Pancreas (tissue), 10 donors: ENCODE measurements at regions of chr3 and their contacts with region 1.

Region 1: DNA sequence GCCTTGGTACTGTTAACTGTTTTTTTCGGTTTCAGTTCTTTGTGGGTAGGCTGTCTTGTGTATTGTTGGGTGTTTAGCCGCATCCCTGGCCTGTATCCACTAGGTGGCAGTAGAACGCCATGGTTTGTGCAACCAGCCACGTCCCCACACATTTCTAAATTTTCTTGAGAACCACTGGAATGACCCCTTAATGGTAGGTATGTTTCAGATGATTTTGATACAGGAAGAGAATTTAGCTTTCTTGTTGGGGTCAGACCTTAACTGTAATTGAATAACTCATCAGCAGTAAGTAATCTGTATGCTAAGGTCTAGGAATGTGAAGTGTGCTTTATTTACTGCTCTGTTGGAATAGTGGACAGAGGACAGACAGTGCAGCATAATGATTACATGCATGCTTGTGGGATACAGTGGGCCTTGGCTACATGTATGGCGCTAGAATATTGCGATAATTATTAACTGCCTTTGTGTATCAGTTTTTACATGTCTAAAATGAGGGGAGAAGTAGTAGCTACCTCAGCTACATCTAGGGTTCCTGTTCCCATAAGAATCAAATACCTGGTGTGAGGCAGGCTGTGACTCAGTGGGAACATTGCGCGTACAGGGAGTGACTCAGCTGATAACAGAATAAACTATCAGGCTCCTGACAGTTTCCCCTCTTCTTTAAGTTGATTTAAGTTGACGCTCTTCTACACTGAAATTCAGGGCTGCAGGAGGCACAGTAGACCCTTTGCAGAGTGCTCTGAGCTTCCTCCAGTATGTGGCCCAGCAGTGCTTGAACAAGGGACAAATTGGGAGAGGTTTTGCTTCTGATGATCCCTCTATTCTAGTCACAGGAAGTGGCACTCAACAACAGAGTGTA is 25.0 kb upstream of the GPR171 start:
- DNase-seq: peak; percentile 44 to 79 (median 60)
- ATAC-seq: peak; percentile 87 to 97 (median 95)
- H3K4me3 ChIP-seq: no peak overlapping the region
- H3K27ac ChIP-seq: no peak overlapping the region
- H3K4me1 ChIP-seq: no peaks in the 10 kb centered on the region
- H3K27me3 ChIP-seq: no peaks in the 10 kb centered on the region
- CTCF ChIP-seq: peak; percentile 71 to 91 (median 84)

Region 2: DNA sequence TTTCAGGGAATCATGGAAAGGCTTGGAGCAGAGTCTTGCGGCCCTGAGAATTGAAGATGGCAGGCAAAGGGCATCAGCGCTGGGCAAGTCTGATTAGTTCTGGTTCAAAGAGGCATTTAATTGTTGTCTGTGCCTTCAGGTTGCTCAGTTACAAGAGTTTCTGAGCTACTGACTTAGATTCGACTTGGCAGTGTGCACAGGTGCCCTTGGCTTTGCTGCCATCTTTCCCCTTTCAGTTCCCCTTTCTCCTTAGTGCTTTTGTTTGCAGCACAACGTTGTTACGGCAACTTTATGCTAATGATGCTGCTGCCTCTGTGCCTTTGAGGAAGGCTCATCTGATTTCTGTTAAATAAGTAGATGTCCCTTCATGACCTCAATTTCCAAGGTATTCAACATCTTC is 37.8 kb after region 1 on chr3:
- intact Hi-C with region 1: no loop called
- DNase-seq: no peak
- ATAC-seq: peak in 2 of 4 donors; percentile 70 to 74
- H3K4me3 ChIP-seq: no peak overlapping the region
- H3K27ac ChIP-seq: no peak overlapping the region
- H3K4me1 ChIP-seq: no peaks in the 10 kb centered on the region
- H3K27me3 ChIP-seq: no peaks in the 10 kb centered on the region
- CTCF ChIP-seq: no peak

Region 3: GRCh38 chr3:151282921-151283320 is 54.9 kb after region 1 on chr3:
- intact Hi-C with region 1: loop called (anchors 2 to 10 kb)
- DNase-seq: no peak
- ATAC-seq: peak; percentile 71 to 90 (median 89)
- H3K4me3 ChIP-seq: no peak overlapping the region
- H3K27ac ChIP-seq: no peak overlapping the region
- H3K4me1 ChIP-seq: no peaks in the 10 kb centered on the region
- H3K27me3 ChIP-seq: no peaks in the 10 kb centered on the region
- CTCF ChIP-seq: peak in 3 of 4 donors; percentile 34 to 53 (median 47)

Region 4: GRCh38 chr3:151289326-151289844 is 61.3 kb after region 1 on chr3:
- intact Hi-C with region 1: loop called in 2 of 3 experiments (anchors 5 to 10 kb)
- DNase-seq: no peak
- ATAC-seq: no peak
- H3K4me3 ChIP-seq: no peak overlapping the region
- H3K27ac ChIP-seq: no peak overlapping the region
- H3K4me1 ChIP-seq: no peaks in the 10 kb centered on the region
- H3K27me3 ChIP-seq: no peaks in the 10 kb centered on the region
- CTCF ChIP-seq: no peak

Region 5: DNA sequence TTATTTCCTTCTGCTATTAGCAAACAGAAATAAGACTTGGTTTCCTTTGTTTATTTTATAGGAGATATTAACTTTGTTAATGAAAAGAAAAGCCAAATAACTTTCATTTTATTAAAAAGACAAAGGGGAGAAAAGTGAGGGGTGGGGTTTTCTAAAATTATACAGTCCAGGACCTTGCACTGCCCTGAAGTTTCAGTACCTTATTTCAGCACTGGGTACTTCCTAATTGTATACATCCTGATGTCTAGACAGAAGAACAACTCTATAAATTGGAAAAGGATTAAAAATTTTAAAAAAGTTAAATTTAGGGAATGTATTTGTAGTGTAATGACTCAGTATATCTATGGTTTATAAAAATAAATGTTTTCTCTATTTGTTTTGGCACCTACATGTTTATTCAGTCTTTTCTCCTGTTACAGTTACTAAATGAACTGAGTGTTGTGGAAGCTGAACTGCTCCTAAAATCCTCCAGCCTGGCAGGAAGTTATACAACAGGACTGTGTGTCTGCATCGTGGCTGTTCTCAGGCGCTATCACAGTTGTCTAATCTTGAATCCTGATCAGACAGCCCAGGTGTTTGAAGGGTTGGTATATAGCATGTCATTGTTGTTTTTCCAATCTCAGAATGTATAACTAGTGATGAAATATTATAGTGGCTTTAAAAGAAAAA is 128.9 kb after region 1 on chr3:
- intact Hi-C with region 1: no loop called
- DNase-seq: no peak
- ATAC-seq: peak in 2 of 4 donors; percentile 29 to 37
- H3K4me3 ChIP-seq: no peak overlapping the region
- H3K27ac ChIP-seq: no peak overlapping the region
- H3K4me1 ChIP-seq: peaks cover 0 to 10% (median 8%) of the 10 kb centered on the region in 3 donors
- H3K27me3 ChIP-seq: no peaks in the 10 kb centered on the region
- CTCF ChIP-seq: no peak